ENCODE measurements at regions of chr13 and their contacts with region 1.

Region 1: DNA sequence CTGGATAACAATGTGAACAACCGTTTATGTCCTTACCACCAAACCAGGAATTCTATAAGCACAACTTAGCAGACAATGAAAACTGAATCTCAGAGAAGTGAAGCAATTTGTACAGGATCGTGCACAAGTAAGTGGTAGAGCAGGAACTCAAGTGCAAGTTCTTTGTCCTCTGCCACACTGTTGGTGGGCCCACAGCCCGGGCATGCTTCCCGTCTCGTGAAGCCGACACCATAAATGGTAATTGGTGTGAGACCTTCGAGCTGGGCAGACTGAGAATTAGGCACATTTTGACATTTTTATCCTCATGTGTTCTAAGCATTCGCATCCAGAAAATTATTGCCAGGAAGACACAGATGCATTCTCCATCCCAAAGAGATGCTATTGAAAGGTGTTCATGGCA is 27.9 kb upstream of the FLT1 start:
- DNase-seq: no peak
- ATAC-seq: no peak
- H3K4me3 ChIP-seq: no peak overlapping the region
- H3K27ac ChIP-seq: no peak overlapping the region
- H3K4me1 ChIP-seq: no peaks in the 10 kb centered on the region
- H3K27me3 ChIP-seq: no peaks in the 10 kb centered on the region
- CTCF ChIP-seq: no peak
- POLR2A ChIP-seq: no peak

Region 2: DNA sequence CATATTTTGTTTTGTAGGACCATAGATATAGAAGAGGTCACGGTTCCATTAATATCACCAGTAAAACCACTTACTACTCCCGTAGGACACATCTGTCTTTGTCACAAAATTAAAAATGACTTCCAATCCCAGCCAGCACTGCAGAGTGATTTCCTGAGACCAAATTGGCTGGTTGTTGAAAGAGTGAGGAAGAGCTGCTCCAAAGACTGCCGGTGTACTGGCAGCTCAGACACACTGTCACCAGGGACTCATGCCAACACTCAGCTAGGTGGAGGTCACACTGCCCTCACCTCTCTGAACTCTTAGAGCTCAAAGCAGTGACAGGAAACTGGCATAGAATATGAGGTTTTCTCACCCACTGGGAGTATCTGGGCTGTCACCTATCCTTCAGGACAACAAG is 80.0 kb before region 1 on chr13:
- in situ Hi-C with region 1: no loop called
- intact Hi-C with region 1: no loop called
- DNase-seq: no peak
- ATAC-seq: no peak
- H3K4me3 ChIP-seq: no peak overlapping the region
- H3K27ac ChIP-seq: peak overlapping the region in 1 of 4 donors; percentile 1
- H3K4me1 ChIP-seq: peaks cover 0 to 8% of the 10 kb centered on the region in 2 donors
- H3K27me3 ChIP-seq: no peaks in the 10 kb centered on the region
- CTCF ChIP-seq: no peak
- POLR2A ChIP-seq: no peak

Region 3: DNA sequence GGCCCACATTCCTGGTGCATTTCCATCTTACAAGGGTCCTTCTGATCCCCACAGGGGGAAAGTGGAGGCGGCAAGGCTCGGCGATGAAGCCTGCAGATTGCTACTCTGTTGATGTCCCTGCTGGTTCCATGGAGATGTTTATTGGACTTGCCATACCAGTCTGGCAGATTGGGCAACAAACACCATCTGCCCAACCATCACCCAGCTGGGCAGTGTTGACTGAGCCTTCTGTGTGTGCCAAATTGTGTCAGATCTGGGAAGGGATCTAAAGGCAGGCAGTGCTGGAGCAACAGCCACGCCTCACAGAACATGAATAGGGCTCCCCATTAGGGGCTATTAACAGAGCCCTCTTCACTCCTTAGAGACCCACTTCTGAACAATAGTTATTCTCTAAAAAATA is 63.0 kb before region 1 on chr13:
- in situ Hi-C with region 1: no loop called
- intact Hi-C with region 1: loop called (anchors 2 kb)
- DNase-seq: no peak
- ATAC-seq: no peak
- H3K4me3 ChIP-seq: no peak overlapping the region
- H3K27ac ChIP-seq: no peak overlapping the region
- H3K4me1 ChIP-seq: no peaks in the 10 kb centered on the region
- H3K27me3 ChIP-seq: no peaks in the 10 kb centered on the region
- CTCF ChIP-seq: no peak
- POLR2A ChIP-seq: no peak

Measured in gastrocnemius medialis (tissue), 4 donors.